Sigmoid colon (tissue), 7 donors: ENCODE measurements at regions of chr9 and their contacts with region 1.

Region 1: GRCh38 chr9:16871356-16872151 is 1.1 kb upstream of the BNC2 start:
- DNase-seq: peak; percentile 86
- H3K4me3 ChIP-seq: peak overlapping the region; percentile 54 to 91 (median 84)
- H3K27ac ChIP-seq: peak overlapping the region; percentile 88 to 98 (median 95)
- H3K4me1 ChIP-seq: peaks cover 0 to 20% (median 5%) of the 10 kb centered on the region in 4 donors
- H3K27me3 ChIP-seq: no peaks in the 10 kb centered on the region
- CTCF ChIP-seq: no peak
- EP300 ChIP-seq: no peak
- POLR2A ChIP-seq: no peak

Region 2: DNA sequence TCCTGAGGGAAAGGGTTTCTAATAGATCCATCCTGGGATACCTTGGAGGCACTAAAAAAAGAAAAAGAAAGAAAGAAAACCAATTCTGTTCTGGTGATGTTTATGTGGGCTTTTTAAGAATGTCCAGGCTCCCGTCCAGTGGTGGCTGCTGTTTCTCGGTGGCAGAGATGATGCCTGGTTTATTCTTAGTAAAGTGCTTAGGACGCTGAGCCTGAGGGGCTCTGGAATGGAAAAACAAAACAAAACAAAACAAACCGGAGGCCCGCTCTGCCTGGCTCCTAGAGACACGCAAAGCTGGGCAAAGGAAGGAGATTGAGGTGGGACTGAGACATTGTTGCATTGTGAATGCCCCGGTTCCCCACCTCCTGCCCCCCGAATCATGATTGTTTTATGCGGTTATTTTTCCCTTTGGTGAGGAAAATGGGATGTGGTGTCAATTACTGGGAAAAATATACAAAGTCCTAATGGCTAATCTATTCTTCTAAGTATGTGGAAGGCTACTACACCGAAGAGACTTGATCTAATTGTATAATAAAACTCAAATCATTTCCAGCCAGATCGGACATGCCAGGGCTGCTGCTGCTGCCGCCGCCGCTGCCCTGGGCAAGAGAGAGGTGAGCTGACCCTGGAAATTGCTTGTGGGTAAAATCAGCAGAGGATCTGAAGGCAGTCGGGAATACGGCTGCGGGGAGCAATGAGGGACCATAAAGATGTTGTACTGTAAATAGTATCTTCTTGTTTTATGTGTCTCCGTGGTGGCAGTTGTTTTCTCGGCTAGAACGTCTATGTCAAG is 673.8 kb before region 1 on chr9:
- intact Hi-C with region 1: loop called (anchors 5 kb)
- DNase-seq: no peak
- H3K4me3 ChIP-seq: peak overlapping the region in 3 of 4 donors; percentile 2 to 22 (median 21)
- H3K27ac ChIP-seq: peak overlapping the region in 3 of 4 donors; percentile 73 to 81 (median 81)
- H3K4me1 ChIP-seq: peaks cover 0 to 61% (median 28%) of the 10 kb centered on the region in 4 donors
- H3K27me3 ChIP-seq: no peaks in the 10 kb centered on the region
- CTCF ChIP-seq: no peak
- EP300 ChIP-seq: no peak
- POLR2A ChIP-seq: no peak

Region 3: DNA sequence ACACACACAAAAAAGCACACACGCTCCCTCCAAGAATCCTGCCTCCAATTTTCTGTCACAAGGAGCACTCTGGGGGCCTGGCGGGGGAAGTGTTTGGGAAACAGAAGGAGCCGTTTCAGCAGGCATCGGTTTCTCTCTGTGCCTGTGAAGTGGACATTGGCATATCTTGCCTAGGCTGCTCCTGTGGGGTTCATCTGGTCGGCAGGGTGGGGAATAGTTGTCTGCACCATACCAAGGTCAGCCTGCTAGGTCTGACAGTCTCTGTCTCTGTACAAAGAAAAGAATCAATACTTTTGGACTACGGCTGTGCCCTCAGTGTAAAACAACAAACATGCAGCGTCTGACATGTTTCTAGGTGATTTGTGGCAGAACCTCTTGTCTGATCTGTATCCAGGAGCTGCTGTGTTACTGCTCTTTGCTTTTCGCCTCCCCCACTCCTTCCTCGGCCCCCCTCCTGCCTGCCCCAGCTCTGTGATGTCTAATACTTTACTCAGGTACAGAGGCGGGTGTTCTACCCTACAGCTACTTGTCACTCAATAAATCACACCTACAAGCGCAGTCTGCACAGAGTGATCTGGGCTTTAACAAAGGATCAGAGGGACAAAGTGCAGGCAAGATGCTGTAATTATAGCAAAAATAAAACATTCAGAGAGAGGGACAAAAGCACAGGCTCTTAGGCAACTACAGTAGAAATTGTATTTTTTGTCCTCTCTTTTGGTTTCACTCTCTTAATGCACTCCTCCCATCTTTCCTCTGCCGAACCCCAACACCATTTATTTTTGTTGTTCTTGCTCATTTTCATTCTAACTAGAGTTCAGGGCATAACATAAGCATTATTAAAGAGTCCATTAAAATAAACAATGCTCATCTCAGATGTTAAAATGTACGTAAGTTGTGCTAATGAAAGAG is 217.8 kb before region 1 on chr9:
- intact Hi-C with region 1: loop called (anchors 10 kb)
- DNase-seq: peak; percentile 76
- H3K4me3 ChIP-seq: peak overlapping the region; percentile 5 to 37 (median 34)
- H3K27ac ChIP-seq: peak overlapping the region; percentile 7 to 83 (median 80)
- H3K4me1 ChIP-seq: peaks cover 0 to 76% (median 54%) of the 10 kb centered on the region in 4 donors
- H3K27me3 ChIP-seq: no peaks in the 10 kb centered on the region
- CTCF ChIP-seq: no peak
- EP300 ChIP-seq: no peak
- POLR2A ChIP-seq: no peak

Region 4: GRCh38 chr9:16782490-16782889 is 89.1 kb before region 1 on chr9:
- intact Hi-C with region 1: no loop called
- DNase-seq: no peak
- H3K4me3 ChIP-seq: no peak overlapping the region
- H3K27ac ChIP-seq: no peak overlapping the region
- H3K4me1 ChIP-seq: peaks cover 0 to 49% (median 39%) of the 10 kb centered on the region in 4 donors
- H3K27me3 ChIP-seq: no peaks in the 10 kb centered on the region
- CTCF ChIP-seq: no peak
- EP300 ChIP-seq: no peak
- POLR2A ChIP-seq: no peak

Region 5: GRCh38 chr9:16828340-16829281 is 42.9 kb before region 1 on chr9:
- intact Hi-C with region 1: loop called (anchors 5 kb)
- DNase-seq: peak; percentile 78
- H3K4me3 ChIP-seq: peak overlapping the region; percentile 9 to 49 (median 44)
- H3K27ac ChIP-seq: peak overlapping the region; percentile 74 to 86 (median 82)
- H3K4me1 ChIP-seq: peaks cover 0 to 83% (median 70%) of the 10 kb centered on the region in 4 donors
- H3K27me3 ChIP-seq: no peaks in the 10 kb centered on the region
- CTCF ChIP-seq: no peak
- EP300 ChIP-seq: no peak
- POLR2A ChIP-seq: no peak